AG04450 (cell line): ENCODE measurements at regions of chr1 and their contacts with region 1.

Region 1: DNA sequence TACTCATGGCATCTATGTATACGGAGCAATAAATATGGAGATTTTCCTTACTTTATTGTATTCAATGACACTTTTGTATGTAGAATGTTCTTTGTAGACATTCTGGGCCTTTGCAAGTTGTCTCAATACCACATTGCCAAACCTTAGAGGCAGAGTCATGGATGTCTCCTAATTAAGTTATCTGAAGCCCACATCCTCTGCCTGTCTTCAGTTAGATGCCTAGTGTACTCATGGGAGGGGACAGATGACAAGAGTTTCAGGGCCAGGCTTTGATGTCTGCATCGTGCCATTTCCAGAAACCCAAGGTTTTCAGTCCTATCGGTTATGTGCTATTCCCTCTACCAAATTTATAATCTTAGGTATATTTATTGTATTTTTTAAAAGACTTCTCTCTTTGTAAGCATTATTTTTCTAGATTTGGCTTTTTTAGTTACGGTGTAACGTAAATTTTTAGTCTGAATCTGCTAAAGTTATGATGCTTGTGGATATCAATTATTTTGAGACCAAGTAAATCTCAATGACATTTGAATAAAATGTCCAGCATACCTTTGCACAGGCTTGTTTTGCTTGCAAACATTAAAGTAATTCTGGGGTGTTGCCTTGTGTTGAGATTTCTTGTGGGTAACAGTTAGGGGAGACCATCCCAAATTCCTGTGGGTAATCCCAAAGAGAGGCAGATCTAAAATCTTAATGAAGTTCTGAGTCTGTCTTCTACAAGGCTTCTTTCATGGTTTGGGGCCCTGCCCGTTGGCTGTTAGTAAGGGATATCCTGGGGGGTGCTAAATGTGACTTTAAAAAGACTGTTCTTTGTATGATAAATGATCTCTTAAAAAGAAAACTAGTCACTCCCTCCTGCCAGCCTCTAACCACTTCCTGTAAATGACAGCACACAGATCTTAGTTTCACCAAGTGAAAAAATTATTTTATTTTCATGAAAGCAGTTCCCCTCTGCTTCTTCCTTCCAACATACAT is 8.0 kb upstream of the MACF1 start:
- DNase-seq: no peak
- H3K4me3 ChIP-seq: no peak overlapping the region
- H3K27ac ChIP-seq: no peak overlapping the region
- H3K27me3 ChIP-seq: no peaks in the 10 kb centered on the region
- CTCF ChIP-seq: no peak

Region 2: GRCh38 chr1:38804062-38804886 is 392.3 kb before region 1 on chr1:
- CTCF ChIA-PET with region 1: no interaction called
- POLR2A ChIA-PET with region 1: no interaction called
- DNase-seq: no peak
- H3K4me3 ChIP-seq: peak overlapping the region; percentile 20; the same call in 1 of the 2 replicates
- H3K27ac ChIP-seq: no peak overlapping the region
- H3K27me3 ChIP-seq: peaks cover 21% of the 10 kb centered on the region
- CTCF ChIP-seq: no peak

Region 3: DNA sequence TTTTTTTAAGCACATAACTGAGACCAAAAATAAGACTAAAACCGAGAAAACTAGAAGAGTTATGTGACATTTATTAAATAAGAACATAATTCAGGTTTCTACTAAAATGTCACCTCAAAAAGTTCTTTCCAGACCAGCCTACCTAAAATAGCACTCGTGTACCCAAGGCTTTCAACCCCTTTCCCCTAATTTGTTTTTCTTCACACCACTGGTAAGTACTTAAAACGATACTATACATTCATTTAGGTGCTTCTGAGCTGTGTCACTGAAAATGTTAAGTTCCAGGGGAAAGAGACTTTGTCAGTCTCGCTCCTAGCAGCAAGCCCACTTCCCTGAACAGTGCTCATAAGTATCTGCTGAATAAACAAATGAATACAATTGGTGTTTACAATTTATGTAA is 343.8 kb before region 1 on chr1:
- CTCF ChIA-PET with region 1: no interaction called
- POLR2A ChIA-PET with region 1: no interaction called
- DNase-seq: no peak
- H3K4me3 ChIP-seq: no peak overlapping the region
- H3K27ac ChIP-seq: no peak overlapping the region
- H3K27me3 ChIP-seq: no peaks in the 10 kb centered on the region
- CTCF ChIP-seq: no peak

Region 4: GRCh38 chr1:39091845-39092645 is 104.5 kb before region 1 on chr1:
- CTCF ChIA-PET with region 1: interaction called, 10 read pairs
- POLR2A ChIA-PET with region 1: no interaction called
- DNase-seq: no peak
- H3K4me3 ChIP-seq: no peak overlapping the region
- H3K27ac ChIP-seq: no peak overlapping the region
- H3K27me3 ChIP-seq: no peaks in the 10 kb centered on the region
- CTCF ChIP-seq: peak; percentile 89

Region 5: DNA sequence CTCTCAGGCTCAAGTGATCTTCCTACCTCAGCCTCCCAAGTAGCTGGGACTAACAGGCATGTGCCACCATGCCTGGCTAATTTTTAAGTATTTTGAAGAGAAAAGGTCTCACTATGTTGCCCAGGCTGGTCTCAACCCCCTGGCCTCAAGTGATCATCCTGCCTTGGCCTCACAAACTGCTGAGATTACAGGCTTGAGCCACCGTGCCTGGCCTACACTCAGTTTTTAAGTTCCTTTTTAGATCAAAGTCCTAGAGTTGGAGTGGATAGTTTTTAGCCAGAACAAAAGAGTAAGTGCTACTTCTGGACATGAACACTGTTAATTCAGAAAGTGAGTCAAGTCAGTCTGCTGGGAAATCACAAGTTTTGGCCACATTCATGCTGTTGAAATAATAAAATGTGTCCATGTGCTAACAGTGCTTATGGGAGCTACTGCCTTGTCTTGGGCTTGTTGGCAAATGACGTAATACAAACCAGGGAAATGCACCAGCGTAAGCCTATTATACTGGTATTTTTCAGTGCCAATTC is 86.1 kb before region 1 on chr1:
- CTCF ChIA-PET with region 1: interaction called, 35 read pairs
- POLR2A ChIA-PET with region 1: interaction called, 5 read pairs
- DNase-seq: no peak
- H3K4me3 ChIP-seq: no peak overlapping the region
- H3K27ac ChIP-seq: peak overlapping the region; percentile 85
- H3K27me3 ChIP-seq: no peaks in the 10 kb centered on the region
- CTCF ChIP-seq: no peak

Region 6: GRCh38 chr1:39158327-39159086 is 38.0 kb before region 1 on chr1:
- CTCF ChIA-PET with region 1: interaction called, 21 read pairs
- POLR2A ChIA-PET with region 1: no interaction called
- DNase-seq: no peak
- H3K4me3 ChIP-seq: peak overlapping the region; percentile 48
- H3K27ac ChIP-seq: peak overlapping the region; percentile 74
- H3K27me3 ChIP-seq: no peaks in the 10 kb centered on the region
- CTCF ChIP-seq: peak; percentile 21; the same call in 1 of the 2 replicates

Region 7: DNA sequence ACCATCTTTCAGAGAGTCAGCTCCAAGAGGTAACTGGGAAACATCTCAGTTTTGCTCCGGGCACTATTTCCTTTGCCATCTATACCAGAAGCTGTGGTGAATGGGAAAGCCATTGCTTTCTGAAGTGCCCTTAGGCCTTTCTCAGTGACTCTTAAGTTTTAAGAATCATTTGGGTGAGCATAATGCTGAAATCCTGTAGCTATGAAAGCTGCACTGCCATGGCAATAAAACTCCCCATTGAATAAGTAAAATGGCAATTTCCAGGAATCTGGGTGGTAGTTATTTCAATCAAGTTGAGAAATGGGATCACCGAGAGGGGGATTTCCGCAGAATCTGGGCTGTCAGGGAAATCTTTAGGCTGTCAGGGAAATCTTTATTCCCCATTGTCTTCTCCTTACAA is 18.8 kb before region 1 on chr1:
- CTCF ChIA-PET with region 1: interaction called, 26 read pairs
- POLR2A ChIA-PET with region 1: interaction called, 4 read pairs
- DNase-seq: no peak
- H3K4me3 ChIP-seq: no peak overlapping the region
- H3K27ac ChIP-seq: peak overlapping the region; percentile 60
- H3K27me3 ChIP-seq: no peaks in the 10 kb centered on the region
- CTCF ChIP-seq: no peak

Region 8: DNA sequence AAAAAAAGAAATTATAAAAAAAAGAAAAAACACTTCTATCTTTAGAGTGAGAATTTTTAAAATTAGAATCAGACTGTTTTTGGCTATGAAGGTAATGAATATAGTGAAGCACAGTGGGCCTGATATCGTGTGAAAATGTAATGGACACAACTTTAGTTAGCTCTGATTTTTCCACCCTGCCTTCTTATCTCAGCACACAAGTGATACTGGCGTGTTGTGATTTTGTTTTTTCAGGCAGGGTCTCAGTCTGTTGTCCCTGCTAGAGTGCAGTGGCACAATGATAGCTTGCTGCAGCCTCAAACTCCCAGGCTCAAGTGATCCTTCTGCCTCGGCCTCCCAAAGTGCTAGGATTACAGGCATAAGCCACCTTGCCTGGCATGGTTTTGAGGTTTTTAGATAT is 30.3 kb after region 1 on chr1:
- CTCF ChIA-PET with region 1: interaction called, 13 read pairs
- POLR2A ChIA-PET with region 1: no interaction called
- DNase-seq: no peak
- H3K4me3 ChIP-seq: no peak overlapping the region
- H3K27ac ChIP-seq: no peak overlapping the region
- H3K27me3 ChIP-seq: no peaks in the 10 kb centered on the region
- CTCF ChIP-seq: no peak

Region 9: GRCh38 chr1:39268112-39268581 is 71.6 kb after region 1 on chr1:
- CTCF ChIA-PET with region 1: interaction called, 13 read pairs
- POLR2A ChIA-PET with region 1: no interaction called
- DNase-seq: peak; percentile 70
- H3K4me3 ChIP-seq: peak overlapping the region; percentile 51
- H3K27ac ChIP-seq: peak overlapping the region; percentile 75
- H3K27me3 ChIP-seq: no peaks in the 10 kb centered on the region
- CTCF ChIP-seq: no peak